Sigmoid colon (tissue), 7 donors: ENCODE measurements at regions of chr1 and their contacts with region 1.

Region 1: GRCh38 chr1:11838349-11839272 is 9.0 kb downstream of the NPPA start:
- DNase-seq: peak; percentile 86
- H3K4me3 ChIP-seq: no peak overlapping the region
- H3K27ac ChIP-seq: no peak overlapping the region
- H3K4me1 ChIP-seq: no peaks in the 10 kb centered on the region
- H3K27me3 ChIP-seq: no peaks in the 10 kb centered on the region
- CTCF ChIP-seq: peak; percentile 92 to 98 (median 94)
- EP300 ChIP-seq: no peak
- POLR2A ChIP-seq: no peak

Region 2: GRCh38 chr1:11531314-11531870 is 307.2 kb before region 1 on chr1:
- intact Hi-C with region 1: no loop called
- DNase-seq: no peak
- H3K4me3 ChIP-seq: no peak overlapping the region
- H3K27ac ChIP-seq: no peak overlapping the region
- H3K4me1 ChIP-seq: no peaks in the 10 kb centered on the region
- H3K27me3 ChIP-seq: peaks cover 0 to 9% (median 0%) of the 10 kb centered on the region in 3 donors
- CTCF ChIP-seq: no peak
- EP300 ChIP-seq: no peak
- POLR2A ChIP-seq: no peak

Region 3: DNA sequence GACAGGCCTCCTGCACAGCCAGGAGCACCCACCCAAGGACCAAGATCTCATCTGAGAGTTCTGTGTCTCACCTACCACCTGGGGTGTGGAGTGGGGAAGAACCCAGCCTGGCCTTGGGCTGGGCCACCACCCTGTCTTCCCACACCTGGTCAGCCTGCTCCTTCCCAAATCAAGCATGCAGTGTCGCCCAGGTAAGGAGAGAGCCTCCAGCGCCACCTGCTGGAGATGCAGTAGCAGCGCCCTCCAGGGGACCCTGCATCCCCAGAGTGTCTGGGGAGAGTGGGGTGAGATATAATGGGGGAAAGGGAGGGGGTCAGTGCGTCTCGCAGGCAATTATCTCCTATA is 55.3 kb after region 1 on chr1:
- intact Hi-C with region 1: loop called (anchors 5 kb)
- DNase-seq: no peak
- H3K4me3 ChIP-seq: no peak overlapping the region
- H3K27ac ChIP-seq: no peak overlapping the region
- H3K4me1 ChIP-seq: no peaks in the 10 kb centered on the region
- H3K27me3 ChIP-seq: peaks cover 10 to 53% (median 24%) of the 10 kb centered on the region in 3 donors
- CTCF ChIP-seq: peak; percentile 34 to 76 (median 64)
- EP300 ChIP-seq: no peak
- POLR2A ChIP-seq: no peak

Region 4: DNA sequence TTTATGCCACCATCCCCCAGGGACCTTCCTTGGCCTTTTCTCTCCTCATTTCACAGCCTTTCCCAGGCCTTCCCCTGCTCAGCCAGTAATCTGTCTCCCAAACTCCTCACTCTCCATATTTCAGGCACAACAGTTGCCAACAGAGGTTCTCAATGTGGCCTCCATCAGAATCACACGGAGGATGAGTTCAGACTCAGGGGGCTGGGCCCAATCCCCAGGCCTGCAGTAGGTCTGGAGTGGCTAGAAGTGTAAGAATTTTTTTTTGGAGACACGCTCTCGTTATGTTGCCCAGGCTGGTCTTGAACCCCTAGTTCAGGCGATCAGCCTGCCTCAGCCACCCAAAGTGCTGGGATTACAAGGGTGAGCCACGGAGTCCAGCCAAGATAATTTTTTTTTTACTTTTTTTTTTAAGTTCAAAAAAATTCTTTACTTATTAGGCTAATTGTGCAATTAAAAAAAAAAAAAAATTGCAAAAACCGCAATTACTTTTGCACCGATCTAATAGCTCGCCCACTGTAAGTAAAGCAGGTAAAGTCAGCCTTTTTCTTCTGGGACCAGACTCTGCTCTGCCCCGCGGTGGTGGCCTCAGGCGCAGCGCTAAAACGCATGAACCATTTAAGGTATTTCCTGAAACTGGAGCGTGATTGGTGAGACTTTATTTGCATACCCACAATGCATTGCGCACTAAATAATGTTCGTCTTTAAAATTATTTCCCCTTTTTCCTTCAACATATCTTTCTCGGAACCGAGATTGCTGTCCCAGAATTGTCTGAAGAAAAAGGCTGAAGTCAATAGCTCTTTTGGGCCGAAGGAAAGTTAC is 68.9 kb after region 1 on chr1:
- intact Hi-C with region 1: loop called (anchors 5 kb)
- DNase-seq: peak; percentile 97
- H3K4me3 ChIP-seq: peak overlapping the region in 3 of 4 donors; percentile 61 to 74 (median 65)
- H3K27ac ChIP-seq: peak overlapping the region; percentile 97 to 99 (median 98)
- H3K4me1 ChIP-seq: peaks cover 0 to 7% (median 0%) of the 10 kb centered on the region in 4 donors
- H3K27me3 ChIP-seq: no peaks in the 10 kb centered on the region
- CTCF ChIP-seq: peak; percentile 69 to 85 (median 72)
- EP300 ChIP-seq: no peak
- POLR2A ChIP-seq: no peak

Region 5: GRCh38 chr1:12031039-12031980 is 192.7 kb after region 1 on chr1:
- intact Hi-C with region 1: loop called (anchors 5 kb)
- DNase-seq: no peak
- H3K4me3 ChIP-seq: no peak overlapping the region
- H3K27ac ChIP-seq: no peak overlapping the region
- H3K4me1 ChIP-seq: no peaks in the 10 kb centered on the region
- H3K27me3 ChIP-seq: no peaks in the 10 kb centered on the region
- CTCF ChIP-seq: peak in 2 of 4 experiments; percentile 37 to 43
- EP300 ChIP-seq: no peak
- POLR2A ChIP-seq: no peak

Region 6: GRCh38 chr1:12229835-12230548 is 391.4 kb after region 1 on chr1 and contains the start of gene VPS13D:
- intact Hi-C with region 1: no loop called
- DNase-seq: peak; percentile 90
- H3K4me3 ChIP-seq: peak within 1 kb of the TSS; percentile 87 to 94 (median 89)
- H3K27ac ChIP-seq: peak within 1 kb of the TSS; percentile 85 to 90 (median 88)
- H3K4me1 ChIP-seq: peaks cover 0 to 19% (median 15%) of the 10 kb centered on the region in 4 donors
- H3K27me3 ChIP-seq: no peaks in the 10 kb centered on the region
- CTCF ChIP-seq: peak in 3 of 4 experiments; percentile 72 to 97 (median 75)
- EP300 ChIP-seq: no peak
- POLR2A ChIP-seq: no peak
- total RNA-seq, gene VPS13D: 49.7 to 90.8 (median 54.7) TPM